ENCODE measurements at regions of chr1 and their contacts with region 1.

Region 1: DNA sequence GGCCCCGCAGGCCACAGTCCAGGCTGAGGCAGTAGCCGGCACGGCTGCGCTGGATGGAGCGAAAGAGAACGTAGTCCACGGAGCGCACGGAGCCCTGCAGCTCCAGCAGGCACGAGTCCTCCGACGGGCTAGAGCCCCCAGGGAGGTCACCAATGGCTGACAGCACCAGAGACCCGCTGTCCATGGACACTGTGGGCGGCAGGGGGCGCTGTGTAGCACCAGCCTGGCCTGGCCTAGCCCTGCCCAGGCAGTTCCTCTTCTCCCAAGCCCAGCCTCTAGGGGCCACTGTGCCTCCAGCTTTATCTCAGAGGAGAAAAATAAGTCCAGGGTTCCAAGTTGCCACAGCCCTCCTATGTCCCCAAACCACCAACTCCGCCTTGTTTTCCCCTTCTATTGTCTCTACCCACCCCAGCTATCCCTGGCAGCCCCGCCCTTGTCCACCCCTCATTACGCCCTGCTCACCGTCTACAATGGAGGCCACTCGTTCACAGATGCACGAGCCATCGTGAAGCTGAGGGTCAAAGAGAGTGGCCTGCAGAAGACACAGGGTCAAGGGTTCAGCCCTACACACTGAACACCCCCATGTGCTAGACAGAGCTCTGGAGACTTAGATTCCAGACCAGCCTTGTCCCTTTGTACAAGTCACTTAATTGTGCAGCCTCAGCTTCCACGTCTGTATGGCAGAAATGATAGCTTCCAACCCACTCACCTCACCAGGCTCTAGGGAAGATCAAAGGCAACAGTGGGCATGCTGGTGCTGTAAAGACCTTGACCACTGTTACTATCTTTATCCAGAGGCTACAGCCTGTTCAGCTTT is 4.4 kb downstream of the ENTREP3 start:
- DNase-seq: peak; percentile 98

Region 2: GRCh38 chr1:155277070-155277895 is 26.4 kb after region 1 on chr1 and contains the start of gene HCN3:
- intact Hi-C with region 1: loop called in 1 of 2 experiments (anchors 2 kb)
- DNase-seq: peak; percentile 99
- total RNA-seq, gene HCN3: 1.4 to 1.5 TPM

Region 3: GRCh38 chr1:155295183-155295941 is 44.5 kb after region 1 on chr1:
- intact Hi-C with region 1: loop called in 1 of 2 experiments (anchors 1 kb)
- DNase-seq: no peak

Region 4: GRCh38 chr1:155323798-155324610 is 73.2 kb after region 1 on chr1:
- intact Hi-C with region 1: loop called in 1 of 2 experiments (anchors 5 kb)
- DNase-seq: peak; percentile 98

Region 5: GRCh38 chr1:155591770-155592169 is 340.9 kb after region 1 on chr1:
- intact Hi-C with region 1: loop called in 1 of 2 experiments (anchors 2 kb)
- DNase-seq: no peak

Measured in posterior vena cava (tissue), 2 donors.